Gastrocnemius medialis (tissue), 4 donors: ENCODE measurements at regions of chr12 and their contacts with region 1.

Region 1: GRCh38 chr12:17778242-17778641 is 311.8 kb downstream of the RERGL start:
- DNase-seq: no peak
- ATAC-seq: no peak
- H3K4me3 ChIP-seq: no peak overlapping the region
- H3K27ac ChIP-seq: no peak overlapping the region
- H3K4me1 ChIP-seq: no peaks in the 10 kb centered on the region
- H3K27me3 ChIP-seq: no peaks in the 10 kb centered on the region
- CTCF ChIP-seq: no peak
- POLR2A ChIP-seq: no peak

Region 2: DNA sequence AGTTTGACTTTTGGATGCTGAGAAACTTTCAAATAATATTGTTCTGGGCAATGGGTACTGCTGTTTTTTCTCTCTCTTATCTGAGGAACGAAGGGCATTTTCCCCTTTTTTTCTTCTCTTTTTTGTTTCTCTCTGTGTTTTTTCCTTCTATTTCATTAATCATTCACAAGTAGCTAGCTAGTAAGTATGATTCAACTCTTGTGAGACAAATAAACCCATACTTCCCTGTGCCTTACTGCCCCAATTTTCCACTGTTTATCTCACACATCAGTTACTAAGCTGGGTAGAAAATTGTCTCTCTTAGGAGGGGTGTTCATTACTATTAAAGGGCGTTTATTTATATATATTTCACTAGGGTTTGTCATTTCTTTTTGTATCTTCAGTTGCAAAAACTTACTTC is 125.8 kb before region 1 on chr12:
- in situ Hi-C with region 1: no loop called
- intact Hi-C with region 1: no loop called
- DNase-seq: no peak
- ATAC-seq: no peak
- H3K4me3 ChIP-seq: no peak overlapping the region
- H3K27ac ChIP-seq: no peak overlapping the region
- H3K4me1 ChIP-seq: no peaks in the 10 kb centered on the region
- H3K27me3 ChIP-seq: no peaks in the 10 kb centered on the region
- CTCF ChIP-seq: no peak
- POLR2A ChIP-seq: no peak

Region 3: GRCh38 chr12:17802657-17803641 is 24.7 kb after region 1 on chr12:
- in situ Hi-C with region 1: no loop called
- intact Hi-C with region 1: no loop called
- DNase-seq: no peak
- ATAC-seq: no peak
- H3K4me3 ChIP-seq: no peak overlapping the region
- H3K27ac ChIP-seq: no peak overlapping the region
- H3K4me1 ChIP-seq: no peaks in the 10 kb centered on the region
- H3K27me3 ChIP-seq: no peaks in the 10 kb centered on the region
- CTCF ChIP-seq: no peak
- POLR2A ChIP-seq: no peak

Region 4: DNA sequence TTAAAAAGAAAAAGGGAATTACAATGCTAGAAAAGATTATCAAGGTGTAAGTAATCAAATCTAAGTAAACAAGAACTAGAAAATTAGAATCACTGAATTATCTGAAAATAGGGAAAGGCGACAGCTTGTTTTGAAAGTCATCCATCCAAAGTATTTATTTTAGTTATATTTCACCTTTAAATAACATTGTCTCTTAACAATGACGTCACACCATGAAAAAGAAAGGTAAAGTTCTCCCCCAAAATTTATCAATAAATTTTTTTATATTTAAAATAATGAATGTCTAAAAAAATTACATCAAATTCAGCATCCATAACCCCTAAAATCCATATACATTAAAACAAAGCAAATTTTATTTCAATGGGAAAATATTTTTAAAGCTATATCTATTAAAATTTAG is 88.6 kb after region 1 on chr12:
- in situ Hi-C with region 1: loop called in 3 of 4 experiments (anchors 5 kb)
- intact Hi-C with region 1: loop called (anchors 5 kb)
- DNase-seq: no peak
- ATAC-seq: no peak
- H3K4me3 ChIP-seq: no peak overlapping the region
- H3K27ac ChIP-seq: no peak overlapping the region
- H3K4me1 ChIP-seq: no peaks in the 10 kb centered on the region
- H3K27me3 ChIP-seq: no peaks in the 10 kb centered on the region
- CTCF ChIP-seq: no peak
- POLR2A ChIP-seq: no peak